CD8-positive, alpha-beta T cell (primary cell): ENCODE measurements at regions of chrX and their contacts with region 1.

Region 1: GRCh38 chrX:106874075-106874474 is 29.1 kb downstream of the RIPPLY1 start:
- DNase-seq: peak in 2 of 9 experiments; percentile 24 to 42
- ATAC-seq: no peak
- H3K4me3 ChIP-seq: no peak overlapping the region
- H3K4me3 Mint-ChIP-seq: no peak overlapping the region
- H3K27ac ChIP-seq: no peak overlapping the region
- H3K27ac Mint-ChIP-seq: no peak overlapping the region
- H3K4me1 ChIP-seq: no peaks in the 10 kb centered on the region
- H3K4me1 Mint-ChIP-seq: no peaks in the 10 kb centered on the region
- H3K27me3 ChIP-seq: no peaks in the 10 kb centered on the region
- H3K27me3 Mint-ChIP-seq: no peaks in the 10 kb centered on the region
- CTCF ChIP-seq: peak; percentile 64

Region 2: GRCh38 chrX:106588801-106589200 is 285.3 kb before region 1 on chrX:
- CTCF ChIA-PET with region 1: no interaction called
- POLR2A ChIA-PET with region 1: no interaction called
- intact Hi-C with region 1: no loop called
- DNase-seq: no peak
- ATAC-seq: no peak
- H3K4me3 ChIP-seq: no peak overlapping the region
- H3K4me3 Mint-ChIP-seq: no peak overlapping the region
- H3K27ac ChIP-seq: no peak overlapping the region
- H3K27ac Mint-ChIP-seq: no peak overlapping the region
- H3K4me1 ChIP-seq: no peaks in the 10 kb centered on the region
- H3K4me1 Mint-ChIP-seq: no peaks in the 10 kb centered on the region
- H3K27me3 ChIP-seq: no peaks in the 10 kb centered on the region
- H3K27me3 Mint-ChIP-seq: no peaks in the 10 kb centered on the region
- CTCF ChIP-seq: no peak

Region 3: DNA sequence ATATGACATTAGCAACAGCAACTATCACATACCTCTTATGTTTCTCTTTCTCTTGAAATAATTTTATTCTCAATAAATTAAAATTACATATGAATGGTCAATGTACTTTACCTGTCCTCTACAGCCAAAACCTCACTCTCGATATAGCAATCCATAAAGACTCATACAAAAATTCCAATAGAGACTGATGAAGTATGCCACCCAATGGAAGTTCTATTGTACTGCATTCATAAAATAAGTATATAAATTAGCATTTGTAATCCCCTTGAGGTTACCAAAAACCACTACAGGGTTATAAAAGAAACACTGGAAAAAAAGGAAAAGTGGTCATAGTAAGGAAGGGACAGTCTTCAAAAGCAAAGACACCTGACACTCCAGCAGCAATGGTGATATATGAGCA is 78.9 kb after region 1 on chrX:
- CTCF ChIA-PET with region 1: no interaction called
- POLR2A ChIA-PET with region 1: no interaction called
- intact Hi-C with region 1: loop called in 1 of 2 experiments (anchors 2 kb)
- DNase-seq: peak in 1 of 9 experiments; percentile 8
- ATAC-seq: no peak
- H3K4me3 ChIP-seq: no peak overlapping the region
- H3K4me3 Mint-ChIP-seq: no peak overlapping the region
- H3K27ac ChIP-seq: no peak overlapping the region
- H3K27ac Mint-ChIP-seq: no peak overlapping the region
- H3K4me1 ChIP-seq: no peaks in the 10 kb centered on the region
- H3K4me1 Mint-ChIP-seq: no peaks in the 10 kb centered on the region
- H3K27me3 ChIP-seq: no peaks in the 10 kb centered on the region
- H3K27me3 Mint-ChIP-seq: no peaks in the 10 kb centered on the region
- CTCF ChIP-seq: no peak